ENCODE measurements at regions of chr17 and their contacts with region 1.

Region 1: DNA sequence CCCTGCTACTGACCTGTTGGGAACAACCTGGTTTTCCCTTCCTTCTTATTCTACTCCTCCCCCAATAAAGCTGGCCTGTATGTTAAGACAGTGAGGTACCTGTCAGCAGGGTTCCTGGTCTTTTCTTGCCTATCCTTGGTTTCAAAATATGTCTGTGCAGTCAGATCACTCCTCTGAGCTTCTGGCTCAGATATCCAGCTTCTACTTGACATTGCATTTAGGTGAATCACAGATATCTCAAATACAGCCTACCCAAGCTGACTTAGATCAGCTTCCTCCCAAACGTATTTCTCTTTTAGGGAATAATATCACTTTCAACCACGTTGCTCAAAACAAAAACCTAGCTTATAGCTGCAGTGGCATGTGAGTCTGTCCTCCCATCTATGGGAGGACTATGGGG is 48.7 kb downstream of the TEX14 start:
- DNase-seq: no peak
- ATAC-seq: no peak
- H3K4me3 ChIP-seq: no peak overlapping the region
- H3K27ac ChIP-seq: no peak overlapping the region
- H3K4me1 ChIP-seq: no peaks in the 10 kb centered on the region
- H3K27me3 ChIP-seq: no peaks in the 10 kb centered on the region
- CTCF ChIP-seq: no peak
- POLR2A ChIP-seq: no peak

Region 2: GRCh38 chr17:58703137-58703972 is 60.2 kb after region 1 on chr17:
- intact Hi-C with region 1: loop called in 1 of 10 experiments (anchors 10 kb)
- DNase-seq: no peak
- ATAC-seq: no peak
- H3K4me3 ChIP-seq: no peak overlapping the region
- H3K27ac ChIP-seq: no peak overlapping the region
- H3K4me1 ChIP-seq: no peaks in the 10 kb centered on the region
- H3K27me3 ChIP-seq: no peaks in the 10 kb centered on the region
- CTCF ChIP-seq: no peak
- POLR2A ChIP-seq: no peak

Measured in heart left ventricle (tissue), 16 donors.